ENCODE measurements at regions of chr11 and their contacts with region 1.

Region 1: DNA sequence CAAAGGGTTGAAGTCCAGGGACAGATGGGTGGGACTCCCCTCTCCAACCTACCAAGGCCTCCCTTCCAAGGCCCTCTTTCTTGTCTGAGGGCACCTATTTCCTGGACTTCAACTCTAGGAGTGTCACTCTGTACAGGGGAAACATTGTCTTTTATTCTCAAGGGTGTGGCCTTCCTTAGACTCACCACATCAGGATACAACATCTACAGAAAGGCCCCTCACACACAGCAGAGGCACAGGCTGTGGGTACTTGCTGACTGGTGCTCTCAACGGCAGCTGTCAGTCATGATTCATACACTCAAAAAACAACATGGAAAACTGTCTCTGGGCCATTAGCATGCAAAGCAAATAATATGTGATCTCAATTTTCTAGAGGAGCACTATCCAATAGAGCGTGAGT is 78.0 kb downstream of the RCN1 start:
- DNase-seq: no peak
- ATAC-seq: no peak
- H3K4me3 ChIP-seq: no peak overlapping the region
- H3K27ac ChIP-seq: no peak overlapping the region
- H3K4me1 ChIP-seq: peaks cover 6% of the 10 kb centered on the region
- H3K27me3 ChIP-seq: no peaks in the 10 kb centered on the region
- CTCF ChIP-seq: no peak

Region 2: GRCh38 chr11:31641477-31642062 is 527.4 kb before region 1 on chr11:
- intact Hi-C with region 1: no loop called
- DNase-seq: no peak
- ATAC-seq: peak; percentile 30
- H3K4me3 ChIP-seq: no peak overlapping the region
- H3K27ac ChIP-seq: no peak overlapping the region
- H3K4me1 ChIP-seq: peaks cover 3% of the 10 kb centered on the region
- H3K27me3 ChIP-seq: no peaks in the 10 kb centered on the region
- CTCF ChIP-seq: peak; percentile 57

Region 3: GRCh38 chr11:32052218-32052617 is 116.7 kb before region 1 on chr11:
- intact Hi-C with region 1: loop called (anchors 5 kb)
- DNase-seq: no peak
- ATAC-seq: peak; percentile 71
- H3K4me3 ChIP-seq: no peak overlapping the region
- H3K27ac ChIP-seq: no peak overlapping the region
- H3K4me1 ChIP-seq: no peaks in the 10 kb centered on the region
- H3K27me3 ChIP-seq: no peaks in the 10 kb centered on the region
- CTCF ChIP-seq: peak; percentile 79

Region 4: GRCh38 chr11:32090545-32091373 is 78.2 kb before region 1 on chr11 and contains the start of gene RCN1:
- intact Hi-C with region 1: no loop called
- DNase-seq: peak; percentile 85
- ATAC-seq: peak; percentile 90
- H3K4me3 ChIP-seq: peak within 1 kb of the TSS; percentile 86
- H3K27ac ChIP-seq: peak within 1 kb of the TSS; percentile 92
- H3K4me1 ChIP-seq: peaks cover 29% of the 10 kb centered on the region
- H3K27me3 ChIP-seq: no peaks in the 10 kb centered on the region
- CTCF ChIP-seq: no peak
- total RNA-seq, gene RCN1: 86.8 TPM

Region 5: DNA sequence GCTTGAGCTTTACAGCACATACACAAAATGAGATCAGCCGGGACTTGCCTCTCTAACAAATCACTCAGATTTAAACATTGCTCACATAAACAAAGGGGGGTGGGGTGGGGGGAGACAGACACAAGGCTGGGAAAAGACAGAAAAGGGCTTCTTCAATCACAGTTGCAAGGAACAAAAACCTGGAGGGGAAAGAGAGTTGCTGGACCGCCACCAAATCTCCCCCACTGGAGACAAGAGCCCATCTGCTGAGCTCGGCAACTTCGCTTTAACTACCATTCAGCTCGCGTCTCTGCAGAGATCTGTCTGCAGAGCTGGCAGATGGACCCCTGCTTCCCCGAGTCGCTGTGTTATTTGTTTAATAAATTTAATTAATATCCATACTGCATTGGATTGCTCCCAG is 86.9 kb after region 1 on chr11:
- intact Hi-C with region 1: no loop called
- DNase-seq: no peak
- ATAC-seq: no peak
- H3K4me3 ChIP-seq: no peak overlapping the region
- H3K27ac ChIP-seq: no peak overlapping the region
- H3K4me1 ChIP-seq: no peaks in the 10 kb centered on the region
- H3K27me3 ChIP-seq: peaks cover 5% of the 10 kb centered on the region
- CTCF ChIP-seq: no peak